AG04450 (cell line): ENCODE measurements at regions of chr6 and their contacts with region 1.

Region 1: GRCh38 chr6:30646458-30647241 is at the start of gene C6orf136:
- DNase-seq: peak; percentile 84
- H3K4me3 ChIP-seq: peak within 1 kb of the TSS; percentile 87
- H3K27ac ChIP-seq: peak within 1 kb of the TSS; percentile 68
- H3K27me3 ChIP-seq: no peaks in the 10 kb centered on the region
- CTCF ChIP-seq: no peak
- polyA plus RNA-seq, gene C6orf136: 5.1 and 5.5 TPM in 2 replicates

Region 2: DNA sequence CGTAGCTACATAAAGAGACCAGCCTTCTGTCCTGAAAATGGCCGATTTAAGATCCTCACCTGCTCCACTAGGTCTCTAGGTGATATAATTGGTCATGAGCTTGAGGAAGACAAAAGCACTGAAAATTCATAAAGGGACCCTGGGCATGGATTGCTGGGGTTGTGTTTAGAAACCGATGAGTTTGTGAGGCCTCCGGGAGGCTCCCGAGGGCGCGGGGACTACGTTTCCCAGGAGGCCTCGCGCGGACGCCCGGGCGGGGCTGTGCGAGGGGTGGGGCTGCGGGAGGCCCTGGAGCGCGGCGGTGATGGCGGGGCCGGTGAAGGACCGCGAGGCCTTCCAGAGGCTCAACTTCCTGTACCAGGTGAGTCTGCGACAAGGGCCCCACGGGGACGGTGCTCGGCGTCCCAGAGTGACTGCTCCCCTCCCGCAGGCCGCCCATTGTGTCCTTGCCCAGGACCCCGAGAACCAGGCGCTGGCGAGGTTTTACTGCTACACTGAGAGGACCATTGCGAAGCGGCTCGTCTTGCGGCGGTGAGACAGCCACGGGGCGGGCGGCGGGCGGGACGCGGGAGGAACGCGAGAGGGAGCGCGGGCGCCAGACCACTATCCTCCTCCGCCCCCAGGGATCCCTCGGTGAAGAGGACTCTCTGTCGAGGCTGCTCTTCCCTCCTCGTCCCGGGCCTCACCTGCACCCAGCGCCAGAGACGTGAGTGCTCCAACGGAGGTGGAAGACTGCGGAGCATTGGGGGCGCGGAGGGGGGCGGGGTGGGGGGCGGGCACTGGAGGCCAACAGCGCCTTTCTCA is 301.6 kb before region 1 on chr6 and contains the start of gene RPP21:
- CTCF ChIA-PET with region 1: no interaction called
- POLR2A ChIA-PET with region 1: no interaction called
- DNase-seq: no peak
- H3K4me3 ChIP-seq: peak within 1 kb of the TSS; percentile 97
- H3K27ac ChIP-seq: peak within 1 kb of the TSS; percentile 39
- H3K27me3 ChIP-seq: no peaks in the 10 kb centered on the region
- CTCF ChIP-seq: no peak
- polyA plus RNA-seq, gene RPP21: 18.9 and 19.7 TPM in 2 replicates

Region 3: GRCh38 chr6:31493875-31494694 is 847.4 kb after region 1 on chr6:
- CTCF ChIA-PET with region 1: no interaction called
- POLR2A ChIA-PET with region 1: interaction called, 11 read pairs
- DNase-seq: no peak
- H3K4me3 ChIP-seq: peak overlapping the region; percentile 71
- H3K27ac ChIP-seq: peak overlapping the region; percentile 78
- H3K27me3 ChIP-seq: no peaks in the 10 kb centered on the region
- CTCF ChIP-seq: peak; percentile 87